ENCODE measurements at regions of chrX and their contacts with region 1.

Region 1: DNA sequence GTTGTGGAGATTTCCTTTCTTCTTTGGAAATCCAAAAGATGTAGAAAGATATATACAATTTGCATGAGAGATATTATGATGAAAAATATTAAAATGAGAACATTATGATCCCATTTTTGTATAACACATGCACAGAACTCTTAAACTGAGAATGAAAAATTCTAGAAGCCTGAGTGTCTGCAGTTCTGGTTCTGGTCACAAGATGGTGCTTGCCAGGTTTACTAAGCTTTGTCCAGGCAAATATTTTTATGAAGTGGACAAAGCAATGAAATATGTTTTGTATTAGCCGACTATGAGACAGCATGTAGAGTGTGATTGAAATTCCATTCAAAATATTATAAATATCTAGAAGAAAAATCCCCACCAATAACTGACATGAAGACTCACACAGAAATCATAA is 2.2 kb downstream of the PWWP3B start:
- DNase-seq: peak in 1 of 2 experiments; percentile 3
- H3K4me3 ChIP-seq: no peak overlapping the region
- H3K4me3 Mint-ChIP-seq: no peak overlapping the region
- H3K27ac Mint-ChIP-seq: no peak overlapping the region
- H3K4me1 ChIP-seq: no peaks in the 10 kb centered on the region
- H3K4me1 Mint-ChIP-seq: peaks cover 7% of the 10 kb centered on the region
- H3K27me3 ChIP-seq: no peaks in the 10 kb centered on the region
- H3K27me3 Mint-ChIP-seq: peaks cover 4% of the 10 kb centered on the region
- CTCF ChIP-seq: peak; percentile 33 to 35

Region 2: DNA sequence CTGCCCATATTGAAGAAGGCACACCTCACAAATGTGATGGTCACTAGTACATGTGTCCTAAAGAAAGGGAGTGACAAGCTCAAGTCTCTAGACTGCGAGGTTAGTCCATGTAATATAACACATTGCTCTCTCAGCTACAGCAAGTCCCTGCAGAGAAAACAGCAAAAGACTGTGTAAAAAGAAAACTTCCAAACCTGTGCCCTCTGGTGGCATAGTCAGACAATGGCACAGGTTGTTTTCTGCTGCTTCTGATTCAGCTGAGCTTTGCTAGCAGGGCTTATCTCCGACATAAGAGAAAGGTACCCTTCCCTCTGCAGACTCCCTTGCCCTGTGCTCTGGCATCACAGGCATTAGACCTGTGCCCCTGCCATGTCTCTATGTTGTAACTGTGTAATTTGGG is 130.4 kb before region 1 on chrX:
- CTCF ChIA-PET with region 1: no interaction called
- POLR2A ChIA-PET with region 1: no interaction called
- intact Hi-C with region 1: loop called (anchors 5 kb)
- DNase-seq: peak in 1 of 2 experiments; percentile 3
- H3K4me3 ChIP-seq: no peak overlapping the region
- H3K4me3 Mint-ChIP-seq: no peak overlapping the region
- H3K27ac Mint-ChIP-seq: no peak overlapping the region
- H3K4me1 ChIP-seq: no peaks in the 10 kb centered on the region
- H3K4me1 Mint-ChIP-seq: peaks cover 9% of the 10 kb centered on the region
- H3K27me3 ChIP-seq: no peaks in the 10 kb centered on the region
- H3K27me3 Mint-ChIP-seq: peaks cover 3% of the 10 kb centered on the region
- CTCF ChIP-seq: peak in 1 of 2 experiments; percentile 45

Region 3: GRCh38 chrX:106220177-106220576 is 49.9 kb after region 1 on chrX:
- CTCF ChIA-PET with region 1: no interaction called
- POLR2A ChIA-PET with region 1: no interaction called
- intact Hi-C with region 1: loop called (anchors 2 kb)
- DNase-seq: no peak
- H3K4me3 ChIP-seq: no peak overlapping the region
- H3K4me3 Mint-ChIP-seq: no peak overlapping the region
- H3K27ac Mint-ChIP-seq: no peak overlapping the region
- H3K4me1 ChIP-seq: no peaks in the 10 kb centered on the region
- H3K4me1 Mint-ChIP-seq: no peaks in the 10 kb centered on the region
- H3K27me3 ChIP-seq: no peaks in the 10 kb centered on the region
- H3K27me3 Mint-ChIP-seq: no peaks in the 10 kb centered on the region
- CTCF ChIP-seq: peak; percentile 25 to 40

Region 4: GRCh38 chrX:106247162-106247561 is 76.8 kb after region 1 on chrX:
- CTCF ChIA-PET with region 1: no interaction called
- POLR2A ChIA-PET with region 1: no interaction called
- intact Hi-C with region 1: no loop called
- DNase-seq: no peak
- H3K4me3 ChIP-seq: no peak overlapping the region
- H3K4me3 Mint-ChIP-seq: no peak overlapping the region
- H3K27ac Mint-ChIP-seq: no peak overlapping the region
- H3K4me1 ChIP-seq: no peaks in the 10 kb centered on the region
- H3K4me1 Mint-ChIP-seq: peaks cover 10% of the 10 kb centered on the region
- H3K27me3 ChIP-seq: no peaks in the 10 kb centered on the region
- H3K27me3 Mint-ChIP-seq: no peaks in the 10 kb centered on the region
- CTCF ChIP-seq: no peak

Region 5: DNA sequence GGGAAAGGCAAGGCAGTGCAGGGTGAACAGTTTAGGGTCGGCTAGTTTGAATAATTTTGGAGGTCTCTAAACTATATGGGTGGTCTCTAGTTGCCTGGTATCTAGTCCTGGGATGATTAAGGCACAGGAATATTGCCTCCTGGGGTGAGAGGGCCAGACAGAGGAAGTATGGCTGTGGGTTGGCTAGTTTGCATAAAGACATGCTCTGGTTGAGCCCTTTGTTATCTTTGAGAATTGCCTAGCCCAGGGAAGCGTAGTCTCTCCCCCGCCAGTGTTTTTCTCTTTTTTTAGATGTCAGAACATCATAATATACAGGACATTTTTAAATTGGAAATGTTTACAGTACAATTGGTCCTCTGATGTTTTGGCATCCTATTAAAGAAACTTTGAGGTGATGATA is 161.3 kb after region 1 on chrX:
- CTCF ChIA-PET with region 1: no interaction called
- POLR2A ChIA-PET with region 1: no interaction called
- intact Hi-C with region 1: no loop called
- DNase-seq: no peak
- H3K4me3 ChIP-seq: no peak overlapping the region
- H3K4me3 Mint-ChIP-seq: no peak overlapping the region
- H3K27ac Mint-ChIP-seq: no peak overlapping the region
- H3K4me1 ChIP-seq: no peaks in the 10 kb centered on the region
- H3K4me1 Mint-ChIP-seq: no peaks in the 10 kb centered on the region
- H3K27me3 ChIP-seq: no peaks in the 10 kb centered on the region
- H3K27me3 Mint-ChIP-seq: no peaks in the 10 kb centered on the region
- CTCF ChIP-seq: no peak